Endothelial cell of umbilical vein (primary cell): ENCODE measurements at regions of chr3 and their contacts with region 1.

Region 1: DNA sequence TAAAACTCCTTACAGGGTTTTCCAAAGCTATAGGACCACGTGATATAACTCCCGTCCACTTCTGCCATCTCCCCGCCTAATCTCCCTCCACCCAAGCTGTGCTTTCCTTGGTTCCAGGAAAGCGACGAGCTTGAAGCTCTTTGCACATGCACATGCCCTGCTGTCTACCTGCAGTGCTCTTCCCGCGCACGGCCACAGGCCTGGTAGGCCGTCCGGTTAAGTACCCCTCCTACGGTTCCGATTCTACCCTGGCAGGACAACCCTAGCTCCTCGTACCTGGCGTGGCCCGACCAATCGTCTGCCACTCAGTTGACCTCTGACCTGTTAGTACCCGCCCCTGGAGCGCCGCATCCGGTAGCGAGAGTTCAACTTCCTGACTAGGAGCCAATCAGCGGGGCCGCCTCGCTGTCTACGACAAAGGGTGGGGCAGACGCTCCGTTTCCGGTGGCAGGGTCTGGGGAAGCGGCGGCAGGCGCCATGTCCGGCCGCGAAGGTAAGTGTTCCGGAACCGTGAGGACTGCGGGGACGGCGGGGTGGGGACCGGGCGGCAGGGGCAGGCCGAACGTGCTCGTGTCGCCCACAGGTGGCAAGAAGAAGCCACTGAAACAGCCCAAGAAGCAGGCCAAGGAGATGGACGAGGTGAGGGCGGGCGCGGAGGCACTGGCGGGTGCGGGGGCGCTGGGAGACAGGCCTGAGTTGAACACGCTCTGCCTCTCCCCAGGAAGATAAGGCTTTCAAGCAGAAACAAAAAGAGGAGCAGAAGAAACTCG is at the starts of genes CCDC51 and TMA7:
- DNase-seq: peak; percentile 96
- H3K4me3 ChIP-seq: peak within 1 kb of the TSS; percentile 73 to 91 (median 77)
- H3K27ac ChIP-seq: peak within 1 kb of the TSS; percentile 79
- H3K4me1 ChIP-seq: peaks cover 16% of the 10 kb centered on the region
- H3K27me3 ChIP-seq: no peaks in the 10 kb centered on the region
- CTCF ChIP-seq: no peak
- POLR2A ChIP-seq: peak; percentile 75
- total RNA-seq, gene CCDC51: 9.8 and 11.2 TPM in 2 replicates
- total RNA-seq, gene TMA7: 306 and 332 TPM in 2 replicates

Region 2: DNA sequence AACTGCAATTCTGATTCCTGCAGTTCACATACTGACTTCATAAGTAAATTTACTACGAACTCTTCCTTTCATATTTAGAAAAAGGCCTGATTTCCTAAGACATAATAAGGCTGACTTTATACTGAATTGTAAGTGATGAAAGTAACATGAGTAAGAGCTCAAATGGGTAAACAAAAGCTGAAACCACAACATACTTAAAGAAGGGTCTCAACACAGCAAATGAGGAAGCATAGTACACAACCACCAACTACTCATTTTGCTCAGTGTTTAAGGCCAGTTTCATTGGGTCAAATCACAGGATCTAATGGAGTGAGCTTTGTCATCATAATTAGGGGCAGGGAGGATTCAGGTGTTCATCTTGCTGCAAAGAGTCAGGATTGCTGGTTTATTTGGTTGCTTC is 1357.5 kb before region 1 on chr3:
- CTCF ChIA-PET with region 1: no interaction called
- POLR2A ChIA-PET with region 1: no interaction called
- dilution Hi-C with region 1: no loop called
- intact Hi-C with region 1: no loop called
- DNase-seq: no peak
- H3K4me3 ChIP-seq: no peak overlapping the region
- H3K27ac ChIP-seq: no peak overlapping the region
- H3K4me1 ChIP-seq: no peaks in the 10 kb centered on the region
- H3K27me3 ChIP-seq: no peaks in the 10 kb centered on the region
- CTCF ChIP-seq: no peak
- POLR2A ChIP-seq: no peak

Region 3: GRCh38 chr3:48194446-48195071 is 245.4 kb before region 1 on chr3:
- CTCF ChIA-PET with region 1: interaction called, 180 read pairs
- POLR2A ChIA-PET with region 1: no interaction called
- dilution Hi-C with region 1: no loop called
- intact Hi-C with region 1: loop called (anchors 1 kb)
- DNase-seq: peak; percentile 63
- H3K4me3 ChIP-seq: no peak overlapping the region
- H3K27ac ChIP-seq: no peak overlapping the region
- H3K4me1 ChIP-seq: no peaks in the 10 kb centered on the region
- H3K27me3 ChIP-seq: peaks cover 0 to 5% of the 10 kb centered on the region in 2 experiments
- CTCF ChIP-seq: peak; percentile 70 to 79
- POLR2A ChIP-seq: no peak

Region 4: DNA sequence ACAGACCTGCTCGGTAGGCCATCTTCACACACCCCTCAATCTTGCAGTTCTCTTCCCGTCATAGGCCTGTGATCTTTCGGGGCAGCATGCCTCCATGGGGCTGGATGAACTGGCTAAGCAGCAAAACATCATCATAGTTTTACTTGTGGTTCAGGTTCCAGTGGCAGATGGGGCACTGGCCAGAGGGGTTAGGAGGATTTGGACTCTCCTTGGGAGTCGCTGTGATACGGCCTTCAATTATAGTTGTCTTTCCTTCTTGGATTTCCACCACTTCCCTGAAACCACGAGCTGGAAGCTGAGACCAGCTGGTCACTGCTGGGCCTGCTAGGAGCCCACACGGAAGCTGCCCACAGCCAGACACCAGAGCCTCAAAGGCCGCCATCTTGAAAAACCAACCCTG is 183.4 kb before region 1 on chr3:
- CTCF ChIA-PET with region 1: interaction called, 41 read pairs
- POLR2A ChIA-PET with region 1: no interaction called
- dilution Hi-C with region 1: no loop called
- intact Hi-C with region 1: no loop called
- DNase-seq: no peak
- H3K4me3 ChIP-seq: no peak overlapping the region
- H3K27ac ChIP-seq: no peak overlapping the region
- H3K4me1 ChIP-seq: no peaks in the 10 kb centered on the region
- H3K27me3 ChIP-seq: no peaks in the 10 kb centered on the region
- CTCF ChIP-seq: no peak
- POLR2A ChIP-seq: no peak

Region 5: DNA sequence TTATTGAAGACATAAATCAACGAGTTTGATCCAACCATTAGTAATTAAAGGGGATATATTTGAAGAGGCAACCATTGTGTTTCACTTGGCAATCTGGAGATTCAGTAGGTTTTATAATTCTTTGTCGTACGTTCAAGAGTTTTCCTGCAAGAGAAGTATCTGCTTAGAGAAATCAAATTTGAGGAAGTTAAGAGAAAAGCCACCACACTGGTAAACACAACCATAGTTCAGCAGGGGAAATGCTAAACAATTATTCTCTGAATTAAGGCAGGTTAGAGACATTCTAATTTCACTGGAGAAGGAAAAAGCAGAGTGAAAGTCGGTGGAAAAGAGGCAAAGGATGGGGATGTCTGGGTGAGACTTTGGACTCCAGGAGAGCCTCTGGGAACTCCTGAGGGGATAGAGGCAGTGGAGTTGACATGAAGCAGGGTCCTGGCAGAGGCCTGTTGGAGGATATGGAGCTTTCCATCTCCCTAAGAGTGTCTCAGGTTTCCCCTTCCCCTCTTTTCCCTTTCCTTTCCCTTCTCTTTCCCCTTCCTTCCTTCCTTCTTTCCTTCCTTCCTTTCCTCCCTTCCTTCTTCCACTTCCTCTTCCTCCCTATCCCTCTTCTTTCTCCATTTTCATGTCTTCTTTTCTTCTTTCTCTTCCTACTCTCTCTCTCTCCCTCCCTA is 133.0 kb before region 1 on chr3:
- CTCF ChIA-PET with region 1: interaction called, 21 read pairs
- POLR2A ChIA-PET with region 1: no interaction called
- dilution Hi-C with region 1: no loop called
- intact Hi-C with region 1: no loop called
- DNase-seq: no peak
- H3K4me3 ChIP-seq: no peak overlapping the region
- H3K27ac ChIP-seq: no peak overlapping the region
- H3K4me1 ChIP-seq: no peaks in the 10 kb centered on the region
- H3K27me3 ChIP-seq: peaks cover 12 to 31% of the 10 kb centered on the region in 2 experiments
- CTCF ChIP-seq: no peak
- POLR2A ChIP-seq: no peak

Region 6: DNA sequence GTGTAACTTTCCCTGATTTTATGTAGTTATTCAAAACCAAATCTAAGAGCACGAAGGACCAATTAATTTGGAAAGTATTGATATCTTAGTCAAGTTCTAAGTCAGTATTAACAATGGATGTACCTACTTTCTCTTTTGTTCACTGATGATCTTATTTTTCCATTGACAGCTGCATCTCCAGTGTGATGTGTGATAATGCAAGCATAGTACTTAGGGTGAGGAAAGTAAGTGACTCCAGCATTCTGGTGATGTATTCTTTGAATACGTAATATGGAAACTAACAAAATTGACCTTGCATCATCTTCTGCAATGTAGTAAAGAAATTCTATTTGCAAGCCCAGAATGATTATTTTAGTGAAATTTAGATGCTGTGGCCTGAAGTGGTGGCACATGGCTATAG is 45.6 kb before region 1 on chr3:
- CTCF ChIA-PET with region 1: interaction called, 716 read pairs
- POLR2A ChIA-PET with region 1: no interaction called
- dilution Hi-C with region 1: no loop called
- intact Hi-C with region 1: no loop called
- DNase-seq: no peak
- H3K4me3 ChIP-seq: no peak overlapping the region
- H3K27ac ChIP-seq: no peak overlapping the region
- H3K4me1 ChIP-seq: no peaks in the 10 kb centered on the region
- H3K27me3 ChIP-seq: peaks cover 10 to 18% of the 10 kb centered on the region in 2 experiments
- CTCF ChIP-seq: no peak
- POLR2A ChIP-seq: no peak

Region 7: DNA sequence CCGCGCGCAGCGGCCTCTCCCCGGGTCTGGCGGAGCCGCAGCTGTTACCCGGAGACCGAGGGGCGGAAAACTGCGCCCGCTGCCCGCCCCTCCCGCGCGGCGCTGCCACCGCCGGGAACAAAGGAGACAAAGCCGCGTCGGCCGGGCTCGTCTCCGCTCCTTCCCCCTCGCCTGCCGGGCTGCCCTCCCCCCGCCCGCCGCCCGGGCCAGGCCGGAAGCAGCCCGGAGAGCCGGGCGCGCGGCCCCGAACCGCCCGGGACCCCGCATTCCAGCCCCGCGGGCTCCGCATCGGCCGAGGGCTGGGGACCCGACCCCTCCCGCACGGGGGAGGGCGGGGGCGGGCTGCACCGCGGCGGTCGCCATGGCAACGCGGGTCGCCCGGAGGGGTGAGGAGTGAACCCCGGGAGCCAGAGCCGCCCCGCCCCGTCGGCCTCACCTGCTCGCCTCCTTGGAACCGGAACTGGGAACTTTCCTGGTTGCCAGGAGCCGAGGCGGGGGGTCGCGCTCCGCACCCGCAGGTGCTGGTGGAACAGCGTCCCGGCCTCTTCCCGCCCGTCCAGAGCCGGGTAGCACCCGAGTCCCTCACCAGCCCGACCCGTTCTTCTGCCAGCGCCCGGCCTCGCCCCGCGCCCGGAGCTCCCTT is 10.6 kb before region 1 on chr3:
- CTCF ChIA-PET with region 1: interaction called, 39 read pairs
- POLR2A ChIA-PET with region 1: interaction called, 5 read pairs
- dilution Hi-C with region 1: no loop called
- intact Hi-C with region 1: no loop called
- DNase-seq: peak; percentile 28
- H3K4me3 ChIP-seq: peak overlapping the region; percentile 49 to 74 (median 62)
- H3K27ac ChIP-seq: peak overlapping the region; percentile 33
- H3K4me1 ChIP-seq: peaks cover 10% of the 10 kb centered on the region
- H3K27me3 ChIP-seq: no peaks in the 10 kb centered on the region
- CTCF ChIP-seq: no peak
- POLR2A ChIP-seq: peak; percentile 55

Region 8: DNA sequence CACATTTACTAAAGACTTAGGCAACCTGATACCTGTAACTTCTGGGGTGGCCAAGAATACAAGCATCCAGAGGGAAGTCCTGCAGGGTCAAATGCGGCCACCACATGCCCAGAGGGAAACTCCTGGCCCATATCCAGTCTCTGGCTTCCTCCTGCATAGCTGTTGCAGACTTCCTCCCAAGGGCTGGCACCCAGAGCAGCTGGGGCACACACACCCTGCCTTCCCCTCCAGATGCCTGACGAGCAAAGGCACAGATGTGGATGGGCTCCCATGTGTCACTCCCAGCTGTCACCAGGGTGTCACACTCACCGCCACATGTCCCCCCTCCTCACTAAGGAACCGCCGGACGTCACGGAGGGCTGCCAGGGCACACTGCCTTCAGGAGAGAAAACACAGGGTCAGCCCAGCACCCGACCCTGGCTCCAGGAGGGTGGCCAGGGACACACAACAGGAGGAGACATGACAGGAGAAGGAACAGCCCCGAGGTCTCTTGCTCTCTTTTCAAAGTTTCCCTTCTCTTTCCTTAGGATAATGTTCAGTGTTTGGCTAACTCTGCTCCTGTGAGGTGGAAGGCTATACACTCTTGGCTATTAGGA is 103.4 kb after region 1 on chr3:
- CTCF ChIA-PET with region 1: interaction called, 63 read pairs
- POLR2A ChIA-PET with region 1: no interaction called
- dilution Hi-C with region 1: no loop called
- intact Hi-C with region 1: loop called (anchors 2 kb)
- DNase-seq: peak; percentile 28
- H3K4me3 ChIP-seq: no peak overlapping the region
- H3K27ac ChIP-seq: no peak overlapping the region
- H3K4me1 ChIP-seq: peaks cover 3% of the 10 kb centered on the region
- H3K27me3 ChIP-seq: no peaks in the 10 kb centered on the region
- CTCF ChIP-seq: no peak
- POLR2A ChIP-seq: no peak

Region 9: DNA sequence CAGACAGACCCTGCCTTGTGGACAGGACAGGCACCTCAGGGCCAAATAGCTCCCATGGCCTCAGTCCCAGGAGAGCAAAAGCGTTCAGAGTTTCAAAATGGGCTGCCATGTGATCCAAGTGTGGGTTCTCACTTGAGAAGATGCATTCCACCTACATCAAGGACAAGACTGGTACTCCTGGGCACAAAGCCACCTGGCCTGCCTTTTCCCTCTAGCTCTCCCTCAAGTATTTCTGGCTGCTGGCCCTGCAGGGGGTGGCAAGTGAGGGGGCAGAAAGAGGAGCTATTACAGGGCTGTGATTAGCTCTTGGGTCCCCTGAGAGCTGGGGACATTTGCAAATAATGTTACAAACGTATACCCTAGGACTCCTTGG is 161.6 kb after region 1 on chr3:
- CTCF ChIA-PET with region 1: no interaction called
- POLR2A ChIA-PET with region 1: no interaction called
- dilution Hi-C with region 1: no loop called
- intact Hi-C with region 1: no loop called
- DNase-seq: no peak
- H3K4me3 ChIP-seq: no peak overlapping the region
- H3K27ac ChIP-seq: no peak overlapping the region
- H3K4me1 ChIP-seq: no peaks in the 10 kb centered on the region
- H3K27me3 ChIP-seq: no peaks in the 10 kb centered on the region
- CTCF ChIP-seq: no peak
- POLR2A ChIP-seq: no peak

Region 10: DNA sequence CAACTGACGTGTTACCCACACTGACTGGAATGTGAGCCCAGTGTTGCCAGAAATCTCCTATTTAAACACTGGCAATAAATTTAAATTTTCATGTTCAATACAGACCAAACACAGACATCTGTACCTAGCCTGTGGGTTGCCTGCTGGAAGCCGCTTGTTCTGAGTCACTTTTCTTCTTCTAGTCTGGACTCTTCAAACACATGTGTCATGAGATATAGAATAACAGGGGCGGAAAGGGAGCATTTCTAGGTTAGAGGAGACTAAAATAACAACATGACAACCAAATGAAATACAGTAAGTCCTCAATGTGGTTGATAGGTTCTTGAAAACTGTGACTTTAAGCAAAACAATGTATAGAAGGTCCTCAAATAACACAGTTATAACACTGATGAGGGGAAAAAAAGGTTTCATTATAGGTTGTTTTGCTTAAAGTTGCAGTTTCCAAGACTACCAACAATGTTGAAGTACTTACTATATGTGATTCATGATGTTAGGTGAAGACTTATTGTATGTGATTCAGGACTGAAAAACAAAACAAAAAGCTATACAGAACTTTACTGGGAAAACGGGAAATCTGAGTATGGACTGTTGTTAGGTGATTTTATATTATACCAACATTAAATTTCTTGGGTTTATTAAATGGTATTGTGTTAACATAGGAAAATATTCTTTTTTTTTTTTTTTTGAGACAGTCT is 344.6 kb after region 1 on chr3:
- CTCF ChIA-PET with region 1: no interaction called
- POLR2A ChIA-PET with region 1: no interaction called
- dilution Hi-C with region 1: no loop called
- intact Hi-C with region 1: no loop called
- DNase-seq: no peak
- H3K4me3 ChIP-seq: no peak overlapping the region
- H3K27ac ChIP-seq: no peak overlapping the region
- H3K4me1 ChIP-seq: no peaks in the 10 kb centered on the region
- H3K27me3 ChIP-seq: no peaks in the 10 kb centered on the region
- CTCF ChIP-seq: no peak
- POLR2A ChIP-seq: no peak